Caco-2 (cell line): ENCODE measurements at regions of chr18 and their contacts with region 1.

Region 1: GRCh38 chr18:45384137-45384961 is 230.9 kb upstream of the SLC14A2 start:
- DNase-seq: peak; percentile 38 to 51
- H3K4me3 ChIP-seq: no peak overlapping the region
- H3K4me3 Mint-ChIP-seq: no peak overlapping the region
- H3K27ac Mint-ChIP-seq: no peak overlapping the region
- H3K4me1 ChIP-seq: peaks cover 7% of the 10 kb centered on the region; the same call in 1 of the 2 replicates
- H3K4me1 Mint-ChIP-seq: peaks cover 12% of the 10 kb centered on the region
- H3K27me3 ChIP-seq: no peaks in the 10 kb centered on the region
- H3K27me3 Mint-ChIP-seq: no peaks in the 10 kb centered on the region
- CTCF ChIP-seq: peak; percentile 34 to 39

Region 2: GRCh38 chr18:44909191-44909719 is 475.1 kb before region 1 on chr18:
- CTCF ChIA-PET with region 1: no interaction called
- POLR2A ChIA-PET with region 1: no interaction called
- intact Hi-C with region 1: loop called (anchors 5 kb)
- DNase-seq: no peak
- H3K4me3 ChIP-seq: no peak overlapping the region
- H3K4me3 Mint-ChIP-seq: no peak overlapping the region
- H3K27ac Mint-ChIP-seq: no peak overlapping the region
- H3K4me1 ChIP-seq: no peaks in the 10 kb centered on the region
- H3K4me1 Mint-ChIP-seq: no peaks in the 10 kb centered on the region
- H3K27me3 ChIP-seq: no peaks in the 10 kb centered on the region
- H3K27me3 Mint-ChIP-seq: no peaks in the 10 kb centered on the region
- CTCF ChIP-seq: no peak

Region 3: GRCh38 chr18:45212181-45213039 is 171.9 kb before region 1 on chr18:
- CTCF ChIA-PET with region 1: no interaction called
- POLR2A ChIA-PET with region 1: no interaction called
- intact Hi-C with region 1: loop called (anchors 5 kb)
- DNase-seq: peak; percentile 47 to 65
- H3K4me3 ChIP-seq: no peak overlapping the region
- H3K4me3 Mint-ChIP-seq: no peak overlapping the region
- H3K27ac Mint-ChIP-seq: no peak overlapping the region
- H3K4me1 ChIP-seq: no peaks in the 10 kb centered on the region
- H3K4me1 Mint-ChIP-seq: no peaks in the 10 kb centered on the region
- H3K27me3 ChIP-seq: no peaks in the 10 kb centered on the region
- H3K27me3 Mint-ChIP-seq: peaks cover 2% of the 10 kb centered on the region
- CTCF ChIP-seq: peak; percentile 74 to 88

Region 4: GRCh38 chr18:45275367-45276113 is 108.8 kb before region 1 on chr18:
- CTCF ChIA-PET with region 1: no interaction called
- POLR2A ChIA-PET with region 1: no interaction called
- intact Hi-C with region 1: loop called (anchors 1 kb)
- DNase-seq: peak in 1 of 2 experiments; percentile 6
- H3K4me3 ChIP-seq: no peak overlapping the region
- H3K4me3 Mint-ChIP-seq: no peak overlapping the region
- H3K27ac Mint-ChIP-seq: no peak overlapping the region
- H3K4me1 ChIP-seq: no peaks in the 10 kb centered on the region
- H3K4me1 Mint-ChIP-seq: no peaks in the 10 kb centered on the region
- H3K27me3 ChIP-seq: no peaks in the 10 kb centered on the region
- H3K27me3 Mint-ChIP-seq: no peaks in the 10 kb centered on the region
- CTCF ChIP-seq: peak; percentile 44 to 50

Region 5: DNA sequence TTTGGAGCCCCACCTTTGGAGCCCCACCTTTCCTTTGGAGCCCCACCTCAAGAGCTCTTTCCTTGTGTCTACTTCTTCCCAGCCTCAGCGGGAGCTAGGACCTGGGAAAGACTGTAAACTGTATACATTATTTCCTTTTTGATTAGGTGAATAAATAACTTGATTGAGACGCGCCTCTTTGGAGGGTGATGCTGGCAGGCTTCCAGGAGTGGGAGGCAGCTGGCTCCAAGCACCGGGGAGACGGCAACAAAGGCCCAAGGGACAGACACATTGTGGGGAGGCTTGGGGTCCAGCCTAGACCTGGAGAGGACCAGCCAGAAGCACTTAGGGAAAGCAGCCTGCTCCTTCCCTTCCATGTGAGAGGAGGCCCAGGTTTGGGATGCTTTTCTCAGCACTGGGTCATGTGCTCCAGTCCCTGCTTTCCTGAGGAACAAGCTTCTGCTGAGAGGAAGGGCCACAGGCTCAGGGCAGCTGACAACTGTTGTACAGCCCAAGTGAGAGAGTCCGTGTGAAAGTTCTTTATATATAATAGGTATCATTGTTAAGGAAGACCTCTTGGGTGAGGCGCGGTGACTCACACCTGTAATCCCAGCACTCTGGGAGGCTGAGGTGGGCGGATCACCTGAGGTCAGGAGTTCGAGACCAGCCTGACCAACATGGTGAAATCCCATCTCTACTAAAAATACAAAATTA is 66.3 kb before region 1 on chr18:
- CTCF ChIA-PET with region 1: no interaction called
- POLR2A ChIA-PET with region 1: no interaction called
- intact Hi-C with region 1: loop called (anchors 5 kb)
- DNase-seq: no peak
- H3K4me3 ChIP-seq: no peak overlapping the region
- H3K4me3 Mint-ChIP-seq: no peak overlapping the region
- H3K27ac Mint-ChIP-seq: no peak overlapping the region
- H3K4me1 ChIP-seq: no peaks in the 10 kb centered on the region
- H3K4me1 Mint-ChIP-seq: no peaks in the 10 kb centered on the region
- H3K27me3 ChIP-seq: no peaks in the 10 kb centered on the region
- H3K27me3 Mint-ChIP-seq: no peaks in the 10 kb centered on the region
- CTCF ChIP-seq: no peak

Region 6: GRCh38 chr18:45355944-45356520 is 28.3 kb before region 1 on chr18:
- CTCF ChIA-PET with region 1: no interaction called
- POLR2A ChIA-PET with region 1: no interaction called
- intact Hi-C with region 1: loop called (anchors 2 kb)
- DNase-seq: no peak
- H3K4me3 ChIP-seq: no peak overlapping the region
- H3K4me3 Mint-ChIP-seq: no peak overlapping the region
- H3K27ac Mint-ChIP-seq: no peak overlapping the region
- H3K4me1 ChIP-seq: peaks cover 26% of the 10 kb centered on the region
- H3K4me1 Mint-ChIP-seq: peaks cover 35% of the 10 kb centered on the region
- H3K27me3 ChIP-seq: no peaks in the 10 kb centered on the region
- H3K27me3 Mint-ChIP-seq: no peaks in the 10 kb centered on the region
- CTCF ChIP-seq: no peak